ENCODE measurements at regions of chr3 and their contacts with region 1.

Region 1: DNA sequence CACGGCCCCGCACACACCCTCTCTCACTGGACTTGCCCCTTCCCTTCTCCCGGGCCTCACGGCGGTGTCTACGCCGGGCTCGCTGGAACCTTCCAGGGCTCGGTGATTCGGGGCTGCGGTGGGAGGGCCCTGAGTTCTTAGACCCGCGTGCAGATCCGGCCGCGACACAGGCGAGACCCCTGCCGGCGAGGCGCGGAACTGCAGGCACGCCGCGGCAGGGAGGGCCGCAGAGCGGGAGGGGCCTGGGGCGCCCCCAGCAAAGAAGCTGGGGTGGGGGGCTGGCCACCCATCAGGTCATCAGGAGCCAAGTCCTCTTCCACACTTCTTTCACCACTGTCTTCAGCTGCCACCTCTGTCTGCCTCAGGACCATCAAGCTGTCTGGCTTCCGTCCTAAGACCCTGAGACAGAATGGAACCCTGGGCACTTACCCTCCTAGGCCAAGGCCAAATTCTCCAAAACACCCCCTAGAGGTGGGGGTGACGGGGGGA is 164.5 kb downstream of the XXYLT1 start:
- DNase-seq: peak; percentile 90
- ATAC-seq: peak; percentile 75

Region 2: GRCh38 chr3:194773216-194773615 is 333.2 kb before region 1 on chr3:
- intact Hi-C with region 1: loop called (anchors 10 kb)
- DNase-seq: no peak
- ATAC-seq: peak; percentile 54

Region 3: GRCh38 chr3:194801461-194802432 is 304.7 kb before region 1 on chr3:
- intact Hi-C with region 1: no loop called
- DNase-seq: no peak
- ATAC-seq: no peak

Region 4: DNA sequence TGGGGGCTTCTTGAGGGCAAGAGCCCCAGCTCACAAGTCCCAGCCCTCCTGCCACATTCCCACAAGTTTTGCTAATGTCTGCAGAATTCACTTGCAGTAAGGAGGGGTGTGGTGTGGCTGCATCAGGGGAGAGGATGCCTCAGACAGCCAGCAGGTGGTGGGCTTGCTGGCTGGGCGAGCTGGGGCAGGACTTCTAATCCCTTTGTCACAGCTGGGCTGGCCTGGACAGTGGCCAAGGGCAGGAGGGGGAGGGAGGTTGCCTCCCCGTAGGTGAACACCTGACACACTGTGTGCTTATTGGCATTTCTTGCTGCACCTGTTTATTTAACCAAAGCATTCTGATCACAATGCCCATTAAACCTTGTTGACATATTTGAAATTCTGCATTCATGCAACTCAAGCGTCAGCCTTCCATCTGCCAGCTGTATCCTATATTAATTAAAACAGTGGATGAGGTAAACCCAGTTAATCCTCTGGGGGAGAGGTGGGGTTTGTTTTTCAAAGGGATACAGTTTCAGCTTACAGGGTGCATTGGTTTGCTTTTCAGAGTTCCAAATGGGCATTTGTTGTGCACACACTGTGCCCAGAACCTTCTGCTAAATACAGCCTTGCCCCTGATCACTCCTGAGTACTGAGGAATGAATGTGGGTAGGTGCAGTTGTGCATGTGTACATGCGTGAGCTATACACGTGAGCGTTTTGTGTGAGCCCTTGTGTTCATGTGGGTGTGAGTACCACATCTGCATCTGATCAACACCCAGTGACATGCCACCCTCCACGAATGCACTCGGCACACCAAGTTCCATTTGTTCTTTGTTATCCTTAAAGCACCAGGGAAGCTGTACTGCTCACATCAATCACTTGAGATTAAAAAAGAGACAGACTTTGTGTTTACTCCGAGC is 104.3 kb before region 1 on chr3:
- intact Hi-C with region 1: loop called (anchors 1 kb)
- DNase-seq: no peak
- ATAC-seq: peak; percentile 43

Region 5: GRCh38 chr3:195259475-195260279 is 153.2 kb after region 1 on chr3:
- intact Hi-C with region 1: loop called (anchors 2 kb)
- DNase-seq: peak; percentile 94
- ATAC-seq: peak; percentile 89

Region 6: DNA sequence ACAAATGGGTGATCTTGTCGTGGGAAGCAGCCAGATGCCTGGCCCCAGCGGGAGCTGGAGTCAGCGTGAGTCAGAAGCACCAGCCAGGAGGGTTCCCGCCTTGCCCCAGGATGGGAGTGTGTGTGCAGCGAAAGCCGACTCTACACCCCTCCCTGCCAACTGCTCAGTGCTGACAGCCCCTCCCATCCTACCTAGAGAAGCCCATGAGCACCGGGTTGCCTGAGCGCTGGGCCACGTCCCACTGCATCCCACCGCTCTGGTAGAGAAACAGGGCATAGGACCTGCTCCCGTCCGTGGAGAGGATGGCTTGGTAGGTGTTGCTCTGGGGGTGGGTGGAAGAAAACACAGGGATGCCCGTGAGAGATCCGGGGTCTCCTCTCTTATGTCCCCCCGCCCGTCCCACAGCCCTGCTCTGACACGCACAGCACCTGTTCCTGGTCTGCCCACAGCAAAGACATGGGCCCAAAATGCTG is 662.4 kb after region 1 on chr3:
- intact Hi-C with region 1: no loop called
- DNase-seq: no peak
- ATAC-seq: no peak